A673 (cell line): ENCODE measurements at regions of chr10 and their contacts with region 1.

Region 1: GRCh38 chr10:7337431-7338171 is 73.2 kb downstream of the SFMBT2 start:
- DNase-seq: no peak
- H3K4me3 ChIP-seq: no peak overlapping the region
- H3K27ac ChIP-seq: no peak overlapping the region
- H3K4me1 ChIP-seq: no peaks in the 10 kb centered on the region
- H3K27me3 ChIP-seq: peaks cover 4% of the 10 kb centered on the region
- CTCF ChIP-seq: no peak

Region 2: GRCh38 chr10:7320072-7320471 is 17.5 kb before region 1 on chr10:
- CTCF ChIA-PET with region 1: no interaction called
- POLR2A ChIA-PET with region 1: interaction called, 14 read pairs
- intact Hi-C with region 1: no loop called
- DNase-seq: no peak
- H3K4me3 ChIP-seq: no peak overlapping the region
- H3K27ac ChIP-seq: no peak overlapping the region
- H3K4me1 ChIP-seq: no peaks in the 10 kb centered on the region
- H3K27me3 ChIP-seq: no peaks in the 10 kb centered on the region
- CTCF ChIP-seq: no peak